ENCODE measurements at regions of chr1 and their contacts with region 1.

Region 1: GRCh38 chr1:113759333-113760101 is at the start of gene PHTF1:
- DNase-seq: peak; percentile 86
- ATAC-seq: peak; percentile 95
- total RNA-seq, gene PHTF1: 6.5 TPM

Region 2: GRCh38 chr1:113811888-113812660 is 52.6 kb after region 1 on chr1 and contains the start of gene RSBN1:
- intact Hi-C with region 1: loop called (anchors 10 kb)
- DNase-seq: peak; percentile 99
- ATAC-seq: peak; percentile 96
- total RNA-seq, gene RSBN1: 9.6 TPM